ENCODE measurements at regions of chr6 and their contacts with region 1.

Region 1: GRCh38 chr6:15358579-15359327 is 112.9 kb downstream of the JARID2 start:
- DNase-seq: peak; percentile 46
- ATAC-seq: peak; percentile 28
- H3K4me3 ChIP-seq: no peak overlapping the region
- H3K27ac ChIP-seq: no peak overlapping the region
- H3K4me1 ChIP-seq: peaks cover 19% of the 10 kb centered on the region
- H3K27me3 ChIP-seq: no peaks in the 10 kb centered on the region
- CTCF ChIP-seq: no peak
- POLR2A ChIP-seq: no peak
- RAD21 ChIP-seq: no peak

Region 2: DNA sequence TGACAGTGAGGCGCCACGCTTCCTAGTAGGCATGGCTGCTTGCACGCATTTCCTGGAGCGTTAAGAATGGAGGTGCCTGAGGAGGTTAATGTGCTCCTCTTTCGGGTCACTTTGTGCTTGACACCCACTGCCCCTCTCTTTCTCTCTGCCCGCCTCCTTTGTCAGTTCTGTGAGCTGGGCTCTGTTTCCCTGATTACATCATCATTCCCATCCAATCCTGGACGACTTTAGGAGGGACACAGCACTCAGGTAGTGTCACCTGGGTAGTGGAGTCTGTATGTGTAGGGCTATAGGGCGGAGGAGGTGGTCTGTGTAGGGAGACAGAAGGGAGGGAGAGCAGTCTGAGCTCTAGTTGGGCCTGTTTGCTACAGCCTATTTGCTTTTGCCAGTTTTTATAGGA is 24.0 kb after region 1 on chr6:
- CTCF ChIA-PET with region 1: interaction called, 12 read pairs
- POLR2A ChIA-PET with region 1: no interaction called
- dilution Hi-C with region 1: no loop called
- in situ Hi-C with region 1: no loop called
- intact Hi-C with region 1: no loop called
- DNase-seq: no peak
- ATAC-seq: no peak
- H3K4me3 ChIP-seq: no peak overlapping the region
- H3K27ac ChIP-seq: no peak overlapping the region
- H3K4me1 ChIP-seq: peaks cover 13% of the 10 kb centered on the region
- H3K27me3 ChIP-seq: no peaks in the 10 kb centered on the region
- CTCF ChIP-seq: no peak
- POLR2A ChIP-seq: no peak
- RAD21 ChIP-seq: no peak

Region 3: GRCh38 chr6:15479761-15480160 is 121.0 kb after region 1 on chr6:
- CTCF ChIA-PET with region 1: no interaction called
- POLR2A ChIA-PET with region 1: no interaction called
- dilution Hi-C with region 1: no loop called
- in situ Hi-C with region 1: no loop called
- intact Hi-C with region 1: no loop called
- DNase-seq: no peak
- ATAC-seq: no peak
- H3K4me3 ChIP-seq: no peak overlapping the region
- H3K27ac ChIP-seq: no peak overlapping the region
- H3K4me1 ChIP-seq: peaks cover 24% of the 10 kb centered on the region
- H3K27me3 ChIP-seq: no peaks in the 10 kb centered on the region
- CTCF ChIP-seq: no peak
- POLR2A ChIP-seq: no peak
- RAD21 ChIP-seq: no peak

Measured in IMR-90 (cell line).